MCF 10A (cell line): ENCODE measurements at regions of chr11 and their contacts with region 1.

Region 1: DNA sequence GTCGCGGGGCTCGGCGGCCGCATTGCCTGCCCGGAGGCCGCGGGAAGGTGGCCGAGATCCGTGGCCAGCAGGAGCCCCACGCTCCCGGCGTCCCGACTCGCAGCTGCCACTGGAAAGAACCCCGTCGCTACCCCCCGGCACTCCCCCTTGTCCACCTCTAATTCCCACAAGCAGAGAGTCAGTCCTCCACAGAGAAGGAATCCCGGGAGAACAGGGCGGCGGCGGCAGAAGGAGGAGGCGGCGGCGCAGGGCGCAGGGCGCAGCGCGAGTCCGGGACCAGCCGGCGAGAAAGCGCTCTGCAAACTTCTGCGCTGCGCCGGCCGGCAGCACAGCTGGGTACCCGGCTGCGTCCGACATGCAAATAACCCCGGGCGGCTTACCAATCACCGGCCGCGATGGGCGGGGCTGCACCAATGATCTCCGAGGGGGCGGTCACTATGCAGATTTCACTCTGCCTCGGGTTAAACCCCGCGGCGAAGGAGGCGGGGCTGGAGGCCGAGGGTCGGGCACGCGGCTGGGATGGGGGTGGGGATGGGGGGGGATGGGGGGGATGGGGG is at the start of gene ABTB2:
- DNase-seq: peak; percentile 95
- H3K4me3 Mint-ChIP-seq: peak within 1 kb of the TSS; percentile 74
- H3K27ac Mint-ChIP-seq: no peak within 1 kb of the TSS
- H3K4me1 Mint-ChIP-seq: peaks cover 8% of the 10 kb centered on the region
- H3K27me3 Mint-ChIP-seq: no peaks in the 10 kb centered on the region
- CTCF ChIP-seq: no peak
- total RNA-seq, gene ABTB2: 2.9 and 3.1 TPM in 2 replicates

Region 2: GRCh38 chr11:34006876-34007275 is 350.9 kb before region 1 on chr11:
- CTCF ChIA-PET with region 1: no interaction called
- POLR2A ChIA-PET with region 1: no interaction called
- intact Hi-C with region 1: no loop called
- DNase-seq: no peak
- H3K4me3 Mint-ChIP-seq: no peak overlapping the region
- H3K27ac Mint-ChIP-seq: no peak overlapping the region
- H3K4me1 Mint-ChIP-seq: no peaks in the 10 kb centered on the region
- H3K27me3 Mint-ChIP-seq: peaks cover 16% of the 10 kb centered on the region
- CTCF ChIP-seq: no peak

Region 3: DNA sequence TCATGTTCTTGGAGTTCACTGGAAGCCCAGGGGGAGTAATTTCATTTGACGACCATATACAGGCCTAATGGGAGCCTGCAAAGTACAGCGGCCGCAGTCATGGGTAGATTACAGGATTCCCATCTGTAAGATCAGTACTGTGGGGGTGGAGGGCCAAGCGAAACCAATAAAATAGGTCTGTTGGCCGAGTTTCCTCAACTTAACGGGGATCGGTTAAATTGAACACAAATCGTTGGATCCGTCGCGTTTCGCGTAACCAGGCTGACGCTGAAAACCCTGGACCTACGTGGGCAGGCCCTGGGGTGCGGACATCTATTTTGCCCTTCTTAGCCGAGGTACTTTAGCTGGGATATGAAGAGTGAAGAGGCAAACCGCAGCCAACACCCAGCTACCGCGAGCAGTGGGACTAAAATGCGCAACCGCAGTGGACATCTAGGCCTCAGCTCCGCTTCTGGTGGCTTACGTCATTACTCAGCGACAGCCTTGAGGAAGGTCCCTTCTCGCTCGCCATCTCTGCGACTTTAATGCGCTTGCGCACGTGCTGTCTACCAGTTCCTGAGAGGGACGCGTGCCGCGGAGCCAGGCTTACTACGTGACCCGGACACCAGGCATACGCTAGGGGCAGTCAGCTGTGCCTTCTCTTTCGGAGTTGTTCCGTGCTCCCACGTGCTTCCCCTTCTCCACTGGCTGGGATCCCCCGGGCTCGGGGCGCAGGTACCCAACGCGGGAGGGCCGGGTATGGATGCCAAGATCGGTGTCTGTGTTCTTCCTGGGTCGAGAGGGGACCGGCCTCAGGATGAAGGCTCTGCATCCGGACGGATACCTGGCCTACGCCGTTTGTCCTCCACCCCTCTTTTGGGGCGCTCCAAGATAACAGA is 252.5 kb before region 1 on chr11 and contains the start of gene NAT10:
- CTCF ChIA-PET with region 1: interaction called, 4 read pairs
- POLR2A ChIA-PET with region 1: interaction called, 10 read pairs
- intact Hi-C with region 1: loop called (anchors 1 kb)
- DNase-seq: peak; percentile 98
- H3K4me3 Mint-ChIP-seq: peak within 1 kb of the TSS; percentile 97
- H3K27ac Mint-ChIP-seq: peak within 1 kb of the TSS; percentile 96
- H3K4me1 Mint-ChIP-seq: peaks cover 24% of the 10 kb centered on the region
- H3K27me3 Mint-ChIP-seq: no peaks in the 10 kb centered on the region
- CTCF ChIP-seq: no peak
- total RNA-seq, gene NAT10: 68.9 and 89.5 TPM in 2 replicates

Region 4: GRCh38 chr11:34192481-34193401 is 165.0 kb before region 1 on chr11:
- CTCF ChIA-PET with region 1: interaction called, 6 read pairs
- POLR2A ChIA-PET with region 1: interaction called, 4 read pairs
- intact Hi-C with region 1: loop called (anchors 5 kb)
- DNase-seq: peak; percentile 95
- H3K4me3 Mint-ChIP-seq: peak overlapping the region; percentile 64
- H3K27ac Mint-ChIP-seq: peak overlapping the region; percentile 74
- H3K4me1 Mint-ChIP-seq: peaks cover 11% of the 10 kb centered on the region
- H3K27me3 Mint-ChIP-seq: no peaks in the 10 kb centered on the region
- CTCF ChIP-seq: no peak

Region 5: DNA sequence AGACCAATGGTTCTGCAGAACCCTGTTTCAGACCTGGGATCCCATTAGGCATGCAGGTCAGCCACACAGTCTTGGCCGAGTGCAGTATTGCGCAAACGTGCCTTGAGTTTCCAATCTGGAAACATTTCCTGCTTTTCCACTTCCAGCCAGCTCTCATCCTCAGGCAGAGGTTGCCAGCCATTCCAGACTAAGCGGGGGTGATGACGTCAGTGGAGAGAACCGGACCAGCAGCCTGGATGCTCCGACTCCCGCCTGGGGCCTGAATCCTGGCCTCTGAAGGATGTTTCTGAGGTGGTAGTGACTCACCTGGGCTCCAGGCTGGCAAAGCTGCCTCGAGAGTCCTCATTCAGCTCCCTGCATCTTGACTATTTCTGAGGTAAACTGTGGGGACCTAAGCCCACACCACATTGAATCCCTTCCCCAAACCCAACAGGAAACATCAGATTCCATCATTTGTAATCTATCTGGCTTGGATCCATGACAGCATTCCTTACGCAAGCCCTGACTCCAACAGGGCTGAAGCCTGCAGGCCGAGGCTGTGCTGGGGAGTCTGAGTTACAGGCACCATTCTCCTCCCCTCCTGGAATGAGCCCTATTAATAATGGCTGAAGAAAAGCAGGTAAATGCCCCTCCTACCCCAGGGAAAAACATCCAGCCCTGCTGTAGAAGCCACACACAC is 82.9 kb before region 1 on chr11:
- CTCF ChIA-PET with region 1: no interaction called
- POLR2A ChIA-PET with region 1: interaction called, 3 read pairs
- intact Hi-C with region 1: loop called (anchors 5 kb)
- DNase-seq: peak; percentile 99
- H3K4me3 Mint-ChIP-seq: no peak overlapping the region
- H3K27ac Mint-ChIP-seq: no peak overlapping the region
- H3K4me1 Mint-ChIP-seq: peaks cover 7% of the 10 kb centered on the region
- H3K27me3 Mint-ChIP-seq: no peaks in the 10 kb centered on the region
- CTCF ChIP-seq: no peak

Region 6: DNA sequence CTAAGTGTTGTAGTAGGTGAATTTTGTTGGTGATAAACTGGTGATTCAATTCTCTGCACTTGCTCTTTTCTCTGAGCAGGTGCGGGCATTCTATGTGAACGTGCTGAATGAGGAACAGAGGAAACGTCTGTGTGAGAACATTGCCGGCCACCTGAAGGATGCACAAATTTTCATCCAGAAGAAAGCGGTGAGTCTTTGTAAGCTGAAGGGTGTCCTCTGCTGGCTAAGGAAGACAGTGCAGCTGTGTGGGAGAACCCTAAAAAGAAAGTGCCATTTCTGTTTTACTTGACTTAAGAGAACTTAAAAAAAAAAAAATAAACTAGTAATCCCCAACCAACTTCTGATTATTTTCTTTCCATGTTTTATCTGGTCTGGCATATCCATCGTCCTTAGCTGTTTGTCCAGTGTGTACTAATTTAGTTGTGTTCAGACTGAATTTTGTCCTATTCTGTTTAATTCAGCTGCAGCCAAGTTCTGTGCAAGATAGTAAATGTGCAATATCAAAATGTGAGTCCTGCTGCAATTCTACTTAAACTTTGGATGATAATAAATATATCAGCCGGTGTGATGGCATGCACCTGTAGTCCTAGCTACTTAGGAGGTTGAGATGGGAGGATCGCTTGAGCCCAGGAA is 110.5 kb after region 1 on chr11:
- CTCF ChIA-PET with region 1: interaction called, 120 read pairs
- POLR2A ChIA-PET with region 1: no interaction called
- intact Hi-C with region 1: loop called (anchors 2 kb)
- DNase-seq: peak; percentile 57
- H3K4me3 Mint-ChIP-seq: no peak overlapping the region
- H3K27ac Mint-ChIP-seq: no peak overlapping the region
- H3K4me1 Mint-ChIP-seq: no peaks in the 10 kb centered on the region
- H3K27me3 Mint-ChIP-seq: no peaks in the 10 kb centered on the region
- CTCF ChIP-seq: peak; percentile 83